ENCODE measurements at regions of chr3 and their contacts with region 1.

Region 1: GRCh38 chr3:111978493-111979433 is at the start of gene ABHD10:
- DNase-seq: peak; percentile 88 to 100 (median 96)
- ATAC-seq: peak; percentile 96 to 97 (median 96)
- H3K4me3 ChIP-seq: peak within 1 kb of the TSS; percentile 73 to 96
- H3K4me3 Mint-ChIP-seq: peak within 1 kb of the TSS; percentile 91 to 94 (median 92)
- H3K27ac ChIP-seq: peak within 1 kb of the TSS; percentile 74
- H3K27ac Mint-ChIP-seq: peak within 1 kb of the TSS; percentile 89 to 92
- H3K4me1 ChIP-seq: peaks cover 9 to 10% of the 10 kb centered on the region in 2 experiments
- H3K4me1 Mint-ChIP-seq: peaks cover 46 to 48% (median 46%) of the 10 kb centered on the region in 3 donors
- H3K27me3 ChIP-seq: no peaks in the 10 kb centered on the region
- H3K27me3 Mint-ChIP-seq: no peaks in the 10 kb centered on the region
- total RNA-seq, gene ABHD10: 18.3 to 31.8 (median 28.1) TPM

Region 2: DNA sequence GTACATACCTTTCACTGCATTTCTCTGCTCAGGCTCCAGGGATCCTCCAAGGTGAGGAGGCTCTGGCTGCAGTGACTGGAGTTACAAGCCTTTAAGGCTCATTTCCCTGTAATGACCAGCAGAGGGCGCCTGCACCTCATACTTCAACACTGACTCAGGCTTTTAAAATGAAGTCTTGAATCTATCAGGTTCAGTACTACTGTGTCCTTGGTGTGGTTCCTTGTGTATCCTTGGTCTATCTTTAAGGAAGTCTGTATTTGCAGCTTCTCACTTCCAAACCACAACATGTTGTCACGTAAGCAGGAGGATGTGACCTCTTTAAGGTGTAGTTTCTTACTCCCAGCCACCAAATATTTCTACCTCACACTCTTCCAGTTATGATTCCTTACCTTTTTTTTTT is 261.2 kb before region 1 on chr3:
- CTCF ChIA-PET with region 1: interaction called, 3 to 22 read pairs
- POLR2A ChIA-PET with region 1: interaction called in 1 of 2 experiments, 5 read pairs
- DNase-seq: peak; percentile 39 to 84 (median 56)
- ATAC-seq: peak; percentile 87 to 89 (median 88)
- H3K4me3 ChIP-seq: no peak overlapping the region
- H3K4me3 Mint-ChIP-seq: no peak overlapping the region
- H3K27ac ChIP-seq: no peak overlapping the region
- H3K27ac Mint-ChIP-seq: peak overlapping the region; percentile 36 to 85
- H3K4me1 ChIP-seq: peaks cover 0 to 4% of the 10 kb centered on the region in 2 experiments
- H3K4me1 Mint-ChIP-seq: peaks cover 0 to 10% (median 4%) of the 10 kb centered on the region in 3 donors
- H3K27me3 ChIP-seq: no peaks in the 10 kb centered on the region
- H3K27me3 Mint-ChIP-seq: no peaks in the 10 kb centered on the region

Region 3: DNA sequence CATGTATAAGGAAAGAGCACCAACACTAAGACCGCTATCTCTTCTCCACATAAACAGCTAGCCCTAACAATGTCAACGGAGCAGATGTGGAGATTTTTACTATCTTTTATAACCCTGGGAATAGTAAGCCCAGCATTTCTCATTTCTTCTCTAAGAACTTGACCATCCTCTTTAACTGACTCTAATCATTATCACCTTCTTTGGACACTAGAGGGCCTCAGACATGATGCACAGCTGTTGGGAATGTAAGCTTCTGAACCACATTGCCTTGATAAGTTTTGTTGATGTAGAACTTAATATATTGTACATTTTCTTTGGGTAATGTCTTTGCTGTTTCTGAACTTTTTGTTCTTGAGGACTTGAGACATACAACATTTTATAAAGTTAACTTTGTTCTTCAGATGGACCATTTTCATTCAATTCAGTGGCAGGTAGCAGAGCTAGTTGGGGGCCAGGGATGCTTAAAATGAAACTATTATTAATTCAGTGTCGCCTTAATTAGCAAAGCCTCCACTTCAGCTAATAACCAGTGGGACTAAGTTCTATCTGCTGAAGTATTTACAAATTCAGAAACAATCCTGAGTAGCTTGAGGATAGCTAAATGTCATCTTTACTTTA is 10.4 kb after region 1 on chr3:
- CTCF ChIA-PET with region 1: interaction called, 9 to 30 read pairs
- POLR2A ChIA-PET with region 1: interaction called in 1 of 2 experiments, 11 read pairs
- DNase-seq: peak in 1 of 35 experiments; percentile 61
- ATAC-seq: peak; percentile 57 to 79 (median 72)
- H3K4me3 ChIP-seq: no peak overlapping the region
- H3K4me3 Mint-ChIP-seq: no peak overlapping the region
- H3K27ac ChIP-seq: no peak overlapping the region
- H3K27ac Mint-ChIP-seq: no peak overlapping the region
- H3K4me1 ChIP-seq: peaks cover 0 to 9% of the 10 kb centered on the region in 2 experiments
- H3K4me1 Mint-ChIP-seq: peaks cover 31 to 36% (median 33%) of the 10 kb centered on the region in 3 donors
- H3K27me3 ChIP-seq: no peaks in the 10 kb centered on the region
- H3K27me3 Mint-ChIP-seq: no peaks in the 10 kb centered on the region

Measured in T-cell (primary cell).